ENCODE measurements at regions of chr1 and their contacts with region 1.

Region 1: GRCh38 chr1:89843281-89844121 is 22.7 kb downstream of the LRRC8D start:
- DNase-seq: no peak
- ATAC-seq: peak; percentile 94
- H3K4me3 ChIP-seq: peak overlapping the region; percentile 95
- H3K27ac ChIP-seq: peak overlapping the region; percentile 67
- H3K4me1 ChIP-seq: peaks cover 13% of the 10 kb centered on the region
- H3K27me3 ChIP-seq: no peaks in the 10 kb centered on the region
- CTCF ChIP-seq: peak; percentile 61 to 69 (median 64); a peak in 5 of 6 replicates
- EP300 ChIP-seq: no peak
- POLR2A ChIP-seq: peak; percentile 83
- RAD21 ChIP-seq: peak; percentile 41; the same call in 1 of the 2 replicates

Region 2: DNA sequence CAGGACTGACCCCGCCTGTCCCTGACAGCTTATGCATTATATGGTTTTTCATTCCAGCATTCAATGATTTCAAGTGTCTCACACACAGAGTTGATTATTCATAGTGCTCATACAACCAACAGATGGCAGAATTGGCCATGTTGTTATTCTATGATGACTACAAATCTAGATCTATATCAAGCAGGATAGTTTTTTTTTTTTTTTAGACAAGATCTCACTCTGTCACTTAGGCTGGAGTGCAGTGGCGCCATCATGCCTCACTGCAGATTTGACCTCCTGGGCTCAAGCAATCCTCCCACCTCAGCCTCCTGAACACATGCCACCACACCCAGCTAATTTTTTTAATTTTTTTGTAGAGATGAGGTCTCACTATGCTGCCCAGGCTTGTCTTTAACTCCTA is 62.8 kb before region 1 on chr1:
- CTCF ChIA-PET with region 1: interaction called, 22 read pairs
- POLR2A ChIA-PET with region 1: interaction called, 7 read pairs
- RAD21 ChIA-PET with region 1: interaction called, 23 read pairs
- SMC1A ChIA-PET with region 1: interaction called, 13 read pairs
- in situ Hi-C with region 1: no loop called
- intact Hi-C with region 1: no loop called
- DNase-seq: no peak
- ATAC-seq: peak; percentile 71
- H3K4me3 ChIP-seq: no peak overlapping the region
- H3K27ac ChIP-seq: no peak overlapping the region
- H3K4me1 ChIP-seq: peaks cover 13% of the 10 kb centered on the region; the same call in 1 of the 2 replicates
- H3K27me3 ChIP-seq: no peaks in the 10 kb centered on the region
- CTCF ChIP-seq: peak; percentile 25 to 43 (median 34); a peak in 4 of 6 replicates
- EP300 ChIP-seq: no peak
- POLR2A ChIP-seq: no peak
- RAD21 ChIP-seq: peak; percentile 66

Region 3: GRCh38 chr1:89820422-89821321 is 22.8 kb before region 1 on chr1 and contains the start of gene LRRC8D:
- CTCF ChIA-PET with region 1: interaction called, 18 read pairs
- POLR2A ChIA-PET with region 1: interaction called, 11 read pairs
- RAD21 ChIA-PET with region 1: interaction called, 7 read pairs
- SMC1A ChIA-PET with region 1: interaction called, 18 read pairs
- in situ Hi-C with region 1: no loop called
- intact Hi-C with region 1: loop called (anchors 2 kb)
- DNase-seq: no peak
- ATAC-seq: peak; percentile 86
- H3K4me3 ChIP-seq: peak within 1 kb of the TSS; percentile 71
- H3K27ac ChIP-seq: peak within 1 kb of the TSS; percentile 71
- H3K4me1 ChIP-seq: peaks cover 18% of the 10 kb centered on the region
- H3K27me3 ChIP-seq: no peaks in the 10 kb centered on the region
- CTCF ChIP-seq: no peak
- EP300 ChIP-seq: no peak
- POLR2A ChIP-seq: peak; percentile 84
- RAD21 ChIP-seq: no peak
- polyA plus RNA-seq, gene LRRC8D: 5.6 to 6.4 TPM

Region 4: GRCh38 chr1:89855413-89856123 is 12.1 kb after region 1 on chr1:
- CTCF ChIA-PET with region 1: interaction called, 7 read pairs
- POLR2A ChIA-PET with region 1: interaction called, 6 read pairs
- RAD21 ChIA-PET with region 1: interaction called, 7 read pairs
- SMC1A ChIA-PET with region 1: interaction called, 28 read pairs
- in situ Hi-C with region 1: no loop called
- intact Hi-C with region 1: no loop called
- DNase-seq: peak; percentile 61
- ATAC-seq: peak; percentile 94
- H3K4me3 ChIP-seq: 0 out of 2 replicates have a peak overlapping the region, but pooled peaks have one; percentile 15
- H3K27ac ChIP-seq: peak overlapping the region; percentile 61; the same call in 1 of the 2 replicates
- H3K4me1 ChIP-seq: peaks cover 14% of the 10 kb centered on the region
- H3K27me3 ChIP-seq: no peaks in the 10 kb centered on the region
- CTCF ChIP-seq: no peak
- EP300 ChIP-seq: peak in 1 of 2 experiments; percentile 60; a peak in 1 of 4 replicates
- POLR2A ChIP-seq: no peak
- RAD21 ChIP-seq: no peak

Region 5: GRCh38 chr1:89987170-89987819 is 143.8 kb after region 1 on chr1:
- CTCF ChIA-PET with region 1: interaction called, 29 read pairs
- POLR2A ChIA-PET with region 1: no interaction called
- RAD21 ChIA-PET with region 1: interaction called, 10 read pairs
- SMC1A ChIA-PET with region 1: interaction called, 20 read pairs
- in situ Hi-C with region 1: no loop called
- intact Hi-C with region 1: loop called (anchors 2 kb)
- DNase-seq: peak; percentile 45
- ATAC-seq: peak; percentile 94
- H3K4me3 ChIP-seq: no peak overlapping the region
- H3K27ac ChIP-seq: no peak overlapping the region
- H3K4me1 ChIP-seq: no peaks in the 10 kb centered on the region
- H3K27me3 ChIP-seq: no peaks in the 10 kb centered on the region
- CTCF ChIP-seq: peak; percentile 78 to 92 (median 88); a peak in 5 of 6 replicates
- EP300 ChIP-seq: no peak
- POLR2A ChIP-seq: no peak
- RAD21 ChIP-seq: peak; percentile 98

Region 6: DNA sequence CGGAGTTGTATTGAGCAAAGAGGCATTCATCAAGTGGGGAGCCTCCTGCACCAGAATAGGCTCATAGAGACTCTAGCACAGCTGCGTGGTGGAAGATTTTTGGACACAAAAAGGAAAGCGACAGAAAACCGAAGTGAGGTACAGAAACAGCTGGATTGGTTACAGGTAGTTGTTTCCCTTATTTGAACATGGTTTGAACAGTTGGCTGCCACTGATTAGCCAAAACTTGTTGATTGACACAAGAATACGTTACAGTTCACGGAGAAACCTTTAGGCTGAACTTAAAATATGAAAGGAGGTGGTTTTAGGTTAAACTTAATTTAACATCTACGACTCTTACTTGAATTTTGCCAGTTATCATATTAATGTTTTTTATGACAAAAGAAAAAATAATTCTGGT is 240.5 kb after region 1 on chr1:
- CTCF ChIA-PET with region 1: no interaction called
- POLR2A ChIA-PET with region 1: no interaction called
- RAD21 ChIA-PET with region 1: no interaction called
- SMC1A ChIA-PET with region 1: no interaction called
- in situ Hi-C with region 1: no loop called
- intact Hi-C with region 1: no loop called
- DNase-seq: no peak
- ATAC-seq: no peak
- H3K4me3 ChIP-seq: no peak overlapping the region
- H3K27ac ChIP-seq: no peak overlapping the region
- H3K4me1 ChIP-seq: no peaks in the 10 kb centered on the region
- H3K27me3 ChIP-seq: no peaks in the 10 kb centered on the region; a peak in 1 of 4 replicates
- CTCF ChIP-seq: no peak
- EP300 ChIP-seq: no peak
- POLR2A ChIP-seq: no peak
- RAD21 ChIP-seq: no peak

Measured in GM12878 (cell line).